Left cardiac atrium (tissue), 4 donors: ENCODE measurements at regions of chr9 and their contacts with region 1.

Region 1: DNA sequence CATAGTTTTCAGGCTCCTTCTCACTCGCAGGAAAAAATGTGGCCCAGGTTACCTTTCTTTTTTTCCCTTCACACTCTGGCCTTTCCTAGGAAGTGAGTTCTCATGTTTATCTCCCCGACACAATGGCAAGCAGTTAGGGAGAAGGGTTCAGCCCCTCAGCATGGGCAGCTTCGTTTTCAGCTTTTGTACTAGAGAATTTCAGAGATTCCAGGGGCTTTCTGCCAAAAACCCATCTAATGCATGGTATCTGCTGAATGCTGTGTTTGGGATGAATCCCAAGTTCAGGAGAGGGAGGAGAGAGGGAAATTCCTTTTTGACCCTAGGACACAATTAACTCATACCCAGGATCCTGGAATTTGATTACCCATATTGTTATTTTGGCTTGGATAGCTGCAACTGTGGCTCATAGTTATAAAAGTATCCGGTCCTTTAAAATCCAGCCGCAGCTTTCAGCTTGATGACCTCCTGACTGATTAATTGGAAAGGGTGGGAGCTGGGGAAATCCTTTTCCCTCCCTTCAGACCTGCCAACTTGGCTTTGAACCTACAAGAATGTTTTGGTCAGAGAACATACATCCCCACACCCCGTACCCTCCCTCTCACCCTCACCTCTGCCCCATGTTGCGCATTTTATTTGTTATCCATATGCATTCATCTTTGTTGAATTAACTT is 78.4 kb downstream of the TMEM252 start:
- DNase-seq: peak; percentile 25
- ATAC-seq: peak; percentile 38 to 58

Region 2: DNA sequence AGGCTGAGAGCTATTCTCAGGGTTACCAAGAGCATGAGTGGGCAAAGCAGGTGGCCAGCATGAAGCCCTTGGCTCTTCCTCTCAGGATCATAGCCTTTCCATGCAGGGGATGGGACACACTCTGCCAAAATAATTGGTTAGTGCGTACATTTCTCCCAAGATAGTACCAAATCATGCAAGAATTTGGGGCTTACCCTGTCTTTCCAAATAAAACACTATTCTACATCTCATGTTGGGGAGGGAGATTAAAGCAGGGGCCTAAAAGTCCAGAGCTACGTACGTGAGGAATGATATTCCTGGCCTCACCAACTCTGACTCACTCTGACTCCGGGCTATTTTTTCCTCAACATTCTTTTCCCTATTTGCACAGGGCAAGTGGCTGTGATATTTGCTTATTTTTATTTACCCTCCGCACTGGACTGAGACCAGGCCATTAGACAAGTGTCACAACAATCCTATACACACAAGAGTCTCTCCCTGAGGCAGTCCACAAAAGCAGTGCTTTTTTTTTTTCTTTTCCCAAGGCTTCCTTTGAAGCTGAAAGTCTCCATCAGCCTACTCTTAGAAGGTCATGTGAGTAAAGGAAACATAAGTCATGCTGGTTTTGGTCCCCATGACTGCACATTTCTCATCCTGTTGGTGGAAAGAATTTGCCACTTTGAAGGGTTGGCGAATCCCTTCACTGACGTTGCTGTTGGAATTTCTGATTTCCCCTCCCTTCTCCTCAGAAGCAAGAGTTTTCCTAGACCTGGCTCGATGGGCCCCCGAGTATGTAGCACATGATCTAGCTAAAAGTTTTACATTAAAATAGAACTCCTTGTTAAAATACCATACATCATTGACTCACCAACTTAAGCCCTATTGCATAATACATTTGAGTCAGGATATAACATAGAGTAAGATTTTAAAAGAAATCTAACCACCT is 38.5 kb after region 1 on chr9:
- intact Hi-C with region 1: loop called in 1 of 2 experiments (anchors 5 kb)
- DNase-seq: no peak
- ATAC-seq: peak; percentile 78 to 79

Region 3: DNA sequence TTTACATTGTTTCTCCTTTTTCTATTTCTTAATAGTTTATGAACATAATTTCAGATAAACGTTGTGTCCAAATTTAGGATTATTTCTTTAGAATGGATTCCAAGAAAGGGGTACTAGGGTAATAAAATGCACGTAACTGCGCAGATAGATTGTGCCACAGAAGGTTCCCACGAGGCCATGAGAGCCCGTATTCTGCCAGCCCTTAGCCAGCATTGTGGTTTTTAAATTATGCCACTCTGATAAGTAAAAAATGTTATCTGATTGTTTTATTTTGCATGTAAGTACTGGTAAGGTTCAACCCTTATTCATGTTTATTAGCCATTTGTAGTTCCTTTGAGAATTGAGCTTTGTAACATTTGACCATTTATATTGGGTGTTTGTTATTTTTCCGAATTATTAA is 462.9 kb after region 1 on chr9:
- intact Hi-C with region 1: no loop called
- DNase-seq: no peak
- ATAC-seq: no peak